ENCODE measurements at regions of chr1 and their contacts with region 1.

Region 1: GRCh38 chr1:211514030-211514754 is 22.2 kb upstream of the RD3 start:
- DNase-seq: peak; percentile 90
- H3K4me3 Mint-ChIP-seq: peak overlapping the region; percentile 23
- H3K27ac Mint-ChIP-seq: no peak overlapping the region
- H3K4me1 Mint-ChIP-seq: peaks cover 23% of the 10 kb centered on the region
- H3K27me3 Mint-ChIP-seq: no peaks in the 10 kb centered on the region

Region 2: GRCh38 chr1:210407207-210407886 is 1106.8 kb before region 1 on chr1:
- CTCF ChIA-PET with region 1: interaction called, 3 read pairs
- intact Hi-C with region 1: loop called (anchors 1 kb)
- DNase-seq: peak; percentile 86
- H3K4me3 Mint-ChIP-seq: no peak overlapping the region
- H3K27ac Mint-ChIP-seq: no peak overlapping the region
- H3K4me1 Mint-ChIP-seq: peaks cover 5% of the 10 kb centered on the region
- H3K27me3 Mint-ChIP-seq: peaks cover 2% of the 10 kb centered on the region

Region 3: DNA sequence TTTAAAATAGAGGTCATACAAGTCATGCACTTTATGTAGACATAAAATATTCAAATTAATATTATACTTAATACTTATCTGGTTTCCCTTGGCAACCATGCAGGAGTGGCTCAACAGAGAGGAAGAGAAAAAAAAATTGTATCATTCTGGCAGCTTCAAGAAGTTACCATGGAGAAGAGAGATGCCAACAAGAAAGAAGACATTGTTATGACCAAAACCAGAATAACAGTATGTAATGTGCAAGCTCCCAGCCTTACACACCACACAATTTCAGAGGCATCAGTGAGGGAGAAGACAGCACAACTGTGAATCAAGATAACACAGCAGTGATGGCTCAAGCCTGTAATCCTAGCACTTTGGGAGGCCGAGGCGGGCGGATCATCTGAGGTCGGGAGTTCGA is 304.1 kb before region 1 on chr1:
- CTCF ChIA-PET with region 1: no interaction called
- intact Hi-C with region 1: no loop called
- DNase-seq: no peak
- H3K4me3 Mint-ChIP-seq: no peak overlapping the region
- H3K27ac Mint-ChIP-seq: no peak overlapping the region
- H3K4me1 Mint-ChIP-seq: no peaks in the 10 kb centered on the region
- H3K27me3 Mint-ChIP-seq: no peaks in the 10 kb centered on the region

Region 4: GRCh38 chr1:211258756-211259637 is 255.2 kb before region 1 on chr1 and contains the start of gene RCOR3:
- CTCF ChIA-PET with region 1: no interaction called
- intact Hi-C with region 1: loop called (anchors 1 kb)
- DNase-seq: peak; percentile 93
- H3K4me3 Mint-ChIP-seq: peak within 1 kb of the TSS; percentile 90
- H3K27ac Mint-ChIP-seq: peak within 1 kb of the TSS; percentile 96
- H3K4me1 Mint-ChIP-seq: peaks cover 16% of the 10 kb centered on the region
- H3K27me3 Mint-ChIP-seq: no peaks in the 10 kb centered on the region
- total RNA-seq, gene RCOR3: 28.9 to 30.8 TPM

Region 5: DNA sequence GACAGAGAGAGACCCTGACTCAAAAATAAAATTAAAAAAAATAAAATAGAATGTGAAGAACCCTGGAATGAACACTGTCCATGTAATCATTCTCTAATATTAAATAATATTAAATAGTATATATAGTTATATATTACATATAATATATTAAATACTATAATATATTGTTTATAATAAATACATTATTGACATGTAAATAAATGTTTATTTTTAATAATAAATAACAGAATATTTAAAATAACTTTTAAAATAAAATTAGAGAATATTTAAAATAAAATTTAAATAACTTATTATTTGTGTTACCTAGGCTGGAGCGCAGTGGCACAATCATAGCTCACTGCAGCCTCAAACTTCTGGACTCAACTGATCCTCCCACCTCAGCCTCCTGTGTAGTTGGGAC is 155.5 kb before region 1 on chr1:
- CTCF ChIA-PET with region 1: no interaction called
- intact Hi-C with region 1: no loop called
- DNase-seq: no peak
- H3K4me3 Mint-ChIP-seq: no peak overlapping the region
- H3K27ac Mint-ChIP-seq: no peak overlapping the region
- H3K4me1 Mint-ChIP-seq: peaks cover 23% of the 10 kb centered on the region
- H3K27me3 Mint-ChIP-seq: no peaks in the 10 kb centered on the region

Region 6: DNA sequence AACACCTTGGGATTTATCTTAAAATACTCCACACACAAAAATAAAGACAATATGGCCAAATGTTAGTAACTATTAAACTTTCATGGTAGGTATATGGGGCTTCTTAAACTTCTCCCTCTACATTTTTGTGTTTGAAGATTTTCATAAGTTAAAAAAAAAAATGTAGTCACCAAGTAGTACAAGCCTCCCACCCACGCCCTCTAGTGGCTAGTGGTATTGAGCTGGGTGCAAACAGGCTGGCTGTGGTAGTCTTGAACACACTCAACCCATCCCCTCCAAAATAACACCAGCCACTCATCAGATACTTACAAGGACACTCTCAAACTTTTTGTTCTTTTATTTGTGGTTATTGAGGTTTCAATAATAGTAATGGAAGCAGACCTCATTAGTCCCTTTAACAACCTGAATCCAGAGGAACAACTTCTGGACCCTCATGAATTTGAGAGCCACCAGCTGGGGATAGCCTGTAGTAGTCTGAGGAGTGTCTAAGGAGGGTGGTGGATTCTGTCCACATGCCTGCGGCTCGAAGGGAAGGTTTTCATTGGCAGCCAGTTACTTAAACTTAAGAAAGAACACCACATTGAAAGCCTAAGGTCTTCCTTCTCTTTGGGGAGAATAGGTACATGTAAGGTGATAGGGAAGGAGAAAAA is 37.9 kb before region 1 on chr1:
- CTCF ChIA-PET with region 1: interaction called, 52 read pairs
- intact Hi-C with region 1: loop called (anchors 1 kb)
- DNase-seq: peak; percentile 90
- H3K4me3 Mint-ChIP-seq: no peak overlapping the region
- H3K27ac Mint-ChIP-seq: no peak overlapping the region
- H3K4me1 Mint-ChIP-seq: no peaks in the 10 kb centered on the region
- H3K27me3 Mint-ChIP-seq: peaks cover 16% of the 10 kb centered on the region

Region 7: GRCh38 chr1:211548321-211549091 is 34.3 kb after region 1 on chr1:
- CTCF ChIA-PET with region 1: interaction called, 3 read pairs
- intact Hi-C with region 1: loop called (anchors 1 kb)
- DNase-seq: peak; percentile 57
- H3K4me3 Mint-ChIP-seq: no peak overlapping the region
- H3K27ac Mint-ChIP-seq: peak overlapping the region; percentile 39
- H3K4me1 Mint-ChIP-seq: no peaks in the 10 kb centered on the region
- H3K27me3 Mint-ChIP-seq: peaks cover 4% of the 10 kb centered on the region

Region 8: DNA sequence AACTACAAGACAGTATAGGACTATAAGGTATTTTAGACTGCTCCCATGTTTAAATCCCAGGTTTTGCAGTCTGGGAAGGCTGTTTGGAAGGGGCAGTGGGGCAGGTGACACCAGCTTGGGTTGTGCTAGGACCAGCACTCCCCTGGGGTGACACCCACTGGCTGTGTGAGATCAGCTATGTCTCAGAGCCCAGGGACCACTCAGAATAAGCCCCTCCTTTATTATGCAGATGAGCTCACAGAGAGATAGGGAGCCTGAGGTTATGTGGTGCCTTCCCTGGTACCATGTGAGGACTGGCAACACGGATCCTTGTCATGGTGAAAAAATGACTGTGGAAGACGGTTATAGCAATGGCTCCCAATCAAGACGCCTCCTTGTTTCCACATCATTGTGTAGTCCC is 989.5 kb after region 1 on chr1:
- CTCF ChIA-PET with region 1: no interaction called
- intact Hi-C with region 1: no loop called
- DNase-seq: no peak
- H3K4me3 Mint-ChIP-seq: no peak overlapping the region
- H3K27ac Mint-ChIP-seq: no peak overlapping the region
- H3K4me1 Mint-ChIP-seq: no peaks in the 10 kb centered on the region
- H3K27me3 Mint-ChIP-seq: no peaks in the 10 kb centered on the region

Measured in activated naive CD4-positive, alpha-beta T cell treated with anti-CD3 and anti-CD28 coated beads for 36 hours (primary cell).